CD4-positive, alpha-beta T cell (primary cell): ENCODE measurements at regions of chr14 and their contacts with region 1.

Region 1: GRCh38 chr14:75709207-75709812 is 48.3 kb downstream of the TTLL5 start:
- DNase-seq: peak; percentile 36 to 79 (median 50)
- ATAC-seq: peak; percentile 66
- H3K4me3 ChIP-seq: no peak overlapping the region
- H3K4me3 Mint-ChIP-seq: no peak overlapping the region
- H3K27ac ChIP-seq: no peak overlapping the region
- H3K27ac Mint-ChIP-seq: no peak overlapping the region
- H3K4me1 ChIP-seq: no peaks in the 10 kb centered on the region
- H3K4me1 Mint-ChIP-seq: no peaks in the 10 kb centered on the region
- H3K27me3 ChIP-seq: no peaks in the 10 kb centered on the region
- H3K27me3 Mint-ChIP-seq: no peaks in the 10 kb centered on the region
- CTCF ChIP-seq: peak; percentile 77

Region 2: DNA sequence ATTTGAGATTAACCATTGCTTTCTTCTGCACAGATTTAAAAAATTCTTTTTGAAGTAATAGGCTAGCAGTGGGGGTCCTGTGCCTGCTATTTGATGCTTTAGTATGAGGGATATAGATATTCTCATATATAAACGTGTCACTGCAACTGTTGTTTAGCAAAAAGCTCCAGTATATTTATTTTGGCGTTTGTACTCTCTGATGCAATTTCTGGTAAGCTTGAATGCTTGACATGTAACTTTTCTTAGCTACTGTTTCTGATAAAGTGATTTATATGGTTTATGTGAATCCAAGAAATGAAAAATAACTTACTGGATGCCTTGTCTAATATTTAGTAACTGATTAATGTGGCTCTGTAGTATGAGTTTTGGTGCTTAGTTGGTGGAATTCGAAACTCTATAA is 28.9 kb after region 1 on chr14:
- CTCF ChIA-PET with region 1: no interaction called
- POLR2A ChIA-PET with region 1: no interaction called
- intact Hi-C with region 1: no loop called
- DNase-seq: no peak
- ATAC-seq: no peak
- H3K4me3 ChIP-seq: no peak overlapping the region
- H3K4me3 Mint-ChIP-seq: no peak overlapping the region
- H3K27ac ChIP-seq: no peak overlapping the region
- H3K27ac Mint-ChIP-seq: no peak overlapping the region
- H3K4me1 ChIP-seq: no peaks in the 10 kb centered on the region
- H3K4me1 Mint-ChIP-seq: no peaks in the 10 kb centered on the region
- H3K27me3 ChIP-seq: no peaks in the 10 kb centered on the region
- H3K27me3 Mint-ChIP-seq: no peaks in the 10 kb centered on the region
- CTCF ChIP-seq: no peak

Region 3: GRCh38 chr14:75906676-75907280 is 197.5 kb after region 1 on chr14:
- CTCF ChIA-PET with region 1: interaction called, 4 read pairs
- POLR2A ChIA-PET with region 1: no interaction called
- intact Hi-C with region 1: loop called in 1 of 2 experiments (anchors 1 kb)
- DNase-seq: peak; percentile 22 to 81 (median 62)
- ATAC-seq: peak; percentile 51
- H3K4me3 ChIP-seq: no peak overlapping the region
- H3K4me3 Mint-ChIP-seq: no peak overlapping the region
- H3K27ac ChIP-seq: no peak overlapping the region
- H3K27ac Mint-ChIP-seq: no peak overlapping the region
- H3K4me1 ChIP-seq: no peaks in the 10 kb centered on the region
- H3K4me1 Mint-ChIP-seq: no peaks in the 10 kb centered on the region
- H3K27me3 ChIP-seq: no peaks in the 10 kb centered on the region
- H3K27me3 Mint-ChIP-seq: no peaks in the 10 kb centered on the region
- CTCF ChIP-seq: peak; percentile 97

Region 4: GRCh38 chr14:76352639-76353281 is 643.5 kb after region 1 on chr14:
- CTCF ChIA-PET with region 1: interaction called, 3 read pairs
- POLR2A ChIA-PET with region 1: no interaction called
- intact Hi-C with region 1: loop called (anchors 2 to 5 kb)
- DNase-seq: peak; percentile 16 to 65 (median 36)
- ATAC-seq: no peak
- H3K4me3 ChIP-seq: no peak overlapping the region
- H3K4me3 Mint-ChIP-seq: no peak overlapping the region
- H3K27ac ChIP-seq: no peak overlapping the region
- H3K27ac Mint-ChIP-seq: no peak overlapping the region
- H3K4me1 ChIP-seq: peaks cover 7% of the 10 kb centered on the region
- H3K4me1 Mint-ChIP-seq: peaks cover 4% of the 10 kb centered on the region
- H3K27me3 ChIP-seq: peaks cover 11 to 14% of the 10 kb centered on the region in 2 experiments
- H3K27me3 Mint-ChIP-seq: peaks cover 76% of the 10 kb centered on the region
- CTCF ChIP-seq: peak; percentile 74

Region 5: GRCh38 chr14:76647697-76648298 is 938.5 kb after region 1 on chr14:
- CTCF ChIA-PET with region 1: no interaction called
- POLR2A ChIA-PET with region 1: no interaction called
- intact Hi-C with region 1: loop called in 1 of 2 experiments (anchors 5 kb)
- DNase-seq: peak in 4 of 14 experiments; percentile 8 to 50 (median 32)
- ATAC-seq: no peak
- H3K4me3 ChIP-seq: no peak overlapping the region
- H3K4me3 Mint-ChIP-seq: no peak overlapping the region
- H3K27ac ChIP-seq: no peak overlapping the region
- H3K27ac Mint-ChIP-seq: no peak overlapping the region
- H3K4me1 ChIP-seq: no peaks in the 10 kb centered on the region
- H3K4me1 Mint-ChIP-seq: no peaks in the 10 kb centered on the region
- H3K27me3 ChIP-seq: peaks cover 0 to 15% of the 10 kb centered on the region in 2 experiments
- H3K27me3 Mint-ChIP-seq: peaks cover 34% of the 10 kb centered on the region
- CTCF ChIP-seq: peak; percentile 70